ENCODE measurements at regions of chrX and their contacts with region 1.

Region 1: GRCh38 chrX:32538554-32538953 is 672.8 kb downstream of the DMD start:
- DNase-seq: no peak
- H3K4me3 ChIP-seq: no peak overlapping the region
- H3K27ac ChIP-seq: no peak overlapping the region
- H3K4me1 ChIP-seq: no peaks in the 10 kb centered on the region
- H3K27me3 ChIP-seq: no peaks in the 10 kb centered on the region
- CTCF ChIP-seq: no peak
- EP300 ChIP-seq: no peak
- POLR2A ChIP-seq: no peak

Region 2: GRCh38 chrX:32778965-32779364 is 240.4 kb after region 1 on chrX:
- intact Hi-C with region 1: no loop called
- DNase-seq: no peak
- H3K4me3 ChIP-seq: no peak overlapping the region
- H3K27ac ChIP-seq: no peak overlapping the region
- H3K4me1 ChIP-seq: no peaks in the 10 kb centered on the region
- H3K27me3 ChIP-seq: no peaks in the 10 kb centered on the region
- CTCF ChIP-seq: no peak
- EP300 ChIP-seq: no peak
- POLR2A ChIP-seq: no peak

Region 3: GRCh38 chrX:33336783-33337182 is 798.2 kb after region 1 on chrX:
- intact Hi-C with region 1: loop called (anchors 5 kb)
- DNase-seq: no peak
- H3K4me3 ChIP-seq: no peak overlapping the region
- H3K27ac ChIP-seq: no peak overlapping the region
- H3K4me1 ChIP-seq: peaks cover 0 to 5% (median 0%) of the 10 kb centered on the region in 4 donors
- H3K27me3 ChIP-seq: no peaks in the 10 kb centered on the region
- CTCF ChIP-seq: peak; percentile 34 to 49 (median 42)
- EP300 ChIP-seq: no peak
- POLR2A ChIP-seq: no peak